HEK293 (cell line): ENCODE measurements at regions of chr2 and their contacts with region 1.

Region 1: GRCh38 chr2:37414470-37414949 is 70.1 kb downstream of the QPCT start:
- H3K4me3 ChIP-seq: no peak overlapping the region
- H3K27ac ChIP-seq: no peak overlapping the region
- H3K4me1 ChIP-seq: no peaks in the 10 kb centered on the region
- CTCF ChIP-seq: peak; percentile 56; the same call in 1 of the 2 replicates

Region 2: GRCh38 chr2:37306024-37306423 is 108.5 kb before region 1 on chr2:
- CTCF ChIA-PET with region 1: no interaction called
- POLR2A ChIA-PET with region 1: no interaction called
- H3K4me3 ChIP-seq: no peak overlapping the region
- H3K27ac ChIP-seq: no peak overlapping the region
- H3K4me1 ChIP-seq: peaks cover 32% of the 10 kb centered on the region
- CTCF ChIP-seq: no peak

Region 3: DNA sequence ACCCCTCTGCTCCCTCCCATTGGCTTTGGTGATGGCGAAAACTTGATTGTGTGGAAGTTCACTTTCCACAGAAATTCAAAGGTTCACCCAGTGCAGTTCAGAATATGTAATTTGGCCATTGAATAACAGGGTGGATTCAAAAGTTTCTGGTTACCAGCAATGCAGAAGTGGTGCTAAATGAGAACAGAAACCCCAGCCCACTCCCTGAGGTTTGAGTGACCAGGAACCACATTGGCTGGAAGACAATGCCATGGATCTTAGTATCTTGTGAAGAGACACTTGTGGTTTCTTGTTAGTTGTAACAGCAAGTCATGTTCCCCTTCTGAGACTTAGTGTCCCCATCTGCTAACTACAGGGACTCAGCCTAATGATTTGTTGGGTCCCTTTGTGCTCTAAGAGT is 20.2 kb before region 1 on chr2:
- CTCF ChIA-PET with region 1: interaction called, 26 read pairs
- POLR2A ChIA-PET with region 1: no interaction called
- H3K4me3 ChIP-seq: no peak overlapping the region
- H3K27ac ChIP-seq: no peak overlapping the region
- H3K4me1 ChIP-seq: 0 out of 2 replicates have a peak, but pooled peaks cover 7% of the 10 kb centered on the region
- CTCF ChIP-seq: no peak

Region 4: DNA sequence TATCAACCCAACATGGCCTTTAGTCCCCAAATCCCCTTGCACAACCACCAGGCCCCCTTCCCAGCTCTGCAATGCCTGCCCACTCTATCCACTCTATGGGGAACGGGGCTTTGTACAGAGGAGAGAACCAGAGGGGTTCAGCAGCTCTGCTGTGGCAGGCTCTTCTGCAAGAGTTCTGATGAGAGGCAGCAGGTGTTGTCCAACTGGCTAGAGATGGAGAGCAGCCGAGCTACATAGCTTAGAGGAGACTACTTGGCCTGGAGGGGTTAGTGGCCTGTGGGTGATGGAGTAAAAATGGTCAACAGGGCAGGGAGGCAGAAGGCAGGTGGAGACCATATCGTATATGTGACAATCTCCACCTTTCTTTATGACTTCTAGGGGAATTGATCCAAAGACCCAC is 32.9 kb after region 1 on chr2:
- CTCF ChIA-PET with region 1: interaction called, 14 read pairs
- POLR2A ChIA-PET with region 1: interaction called, 3 read pairs
- H3K4me3 ChIP-seq: no peak overlapping the region
- H3K27ac ChIP-seq: no peak overlapping the region
- H3K4me1 ChIP-seq: peaks cover 8% of the 10 kb centered on the region
- CTCF ChIP-seq: no peak

Region 5: DNA sequence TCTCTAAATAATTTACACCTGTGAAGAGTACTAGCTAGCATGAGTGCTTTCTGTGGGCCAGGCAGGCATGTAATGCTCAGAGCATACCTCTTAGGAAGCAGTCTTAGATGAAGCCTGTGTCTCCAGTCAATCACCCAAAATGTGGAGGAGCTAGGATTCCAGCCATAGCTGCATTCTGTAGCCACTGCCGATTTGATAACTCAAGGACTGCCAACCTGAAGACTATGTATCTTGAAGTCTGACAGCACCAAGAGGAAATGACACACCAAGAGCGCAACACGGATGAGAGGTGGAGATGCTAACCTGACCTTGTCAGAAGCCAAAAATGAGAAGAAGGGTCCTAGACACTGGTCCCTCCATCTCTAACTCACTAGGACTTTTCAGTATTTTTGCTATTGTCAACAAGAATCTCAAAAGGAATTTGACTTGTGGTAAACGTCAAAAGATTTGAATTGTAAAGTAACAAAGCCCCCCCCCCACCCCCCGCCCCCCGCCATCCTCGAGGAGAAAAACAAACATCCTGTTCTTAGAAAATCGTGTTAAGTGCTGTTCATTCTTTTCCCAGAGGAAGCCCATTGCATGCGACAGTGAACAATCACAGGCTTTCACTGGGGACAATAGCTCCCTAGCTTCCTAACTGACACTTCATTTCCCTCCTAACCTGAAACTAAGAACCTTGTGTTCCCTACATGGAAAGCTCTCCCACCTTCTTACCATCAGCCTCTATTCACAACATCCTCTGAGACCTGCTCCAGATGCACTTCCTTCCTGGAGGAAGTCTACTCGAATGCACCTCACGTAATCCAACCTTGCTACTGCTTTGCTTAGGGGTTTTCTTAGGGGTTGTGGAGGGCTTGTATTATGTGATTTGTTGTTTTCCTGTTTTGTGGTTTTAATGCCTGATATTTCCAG is 242.3 kb after region 1 on chr2:
- CTCF ChIA-PET with region 1: interaction called, 12 read pairs
- POLR2A ChIA-PET with region 1: no interaction called
- H3K4me3 ChIP-seq: no peak overlapping the region
- H3K27ac ChIP-seq: 0 out of 2 replicates have a peak overlapping the region, but pooled peaks have one; percentile 7
- H3K4me1 ChIP-seq: peaks cover 30% of the 10 kb centered on the region
- CTCF ChIP-seq: no peak

Region 6: GRCh38 chr2:37683921-37684780 is 269.6 kb after region 1 on chr2:
- CTCF ChIA-PET with region 1: no interaction called
- POLR2A ChIA-PET with region 1: no interaction called
- H3K4me3 ChIP-seq: no peak overlapping the region
- H3K27ac ChIP-seq: no peak overlapping the region
- H3K4me1 ChIP-seq: no peaks in the 10 kb centered on the region
- CTCF ChIP-seq: no peak

Region 7: DNA sequence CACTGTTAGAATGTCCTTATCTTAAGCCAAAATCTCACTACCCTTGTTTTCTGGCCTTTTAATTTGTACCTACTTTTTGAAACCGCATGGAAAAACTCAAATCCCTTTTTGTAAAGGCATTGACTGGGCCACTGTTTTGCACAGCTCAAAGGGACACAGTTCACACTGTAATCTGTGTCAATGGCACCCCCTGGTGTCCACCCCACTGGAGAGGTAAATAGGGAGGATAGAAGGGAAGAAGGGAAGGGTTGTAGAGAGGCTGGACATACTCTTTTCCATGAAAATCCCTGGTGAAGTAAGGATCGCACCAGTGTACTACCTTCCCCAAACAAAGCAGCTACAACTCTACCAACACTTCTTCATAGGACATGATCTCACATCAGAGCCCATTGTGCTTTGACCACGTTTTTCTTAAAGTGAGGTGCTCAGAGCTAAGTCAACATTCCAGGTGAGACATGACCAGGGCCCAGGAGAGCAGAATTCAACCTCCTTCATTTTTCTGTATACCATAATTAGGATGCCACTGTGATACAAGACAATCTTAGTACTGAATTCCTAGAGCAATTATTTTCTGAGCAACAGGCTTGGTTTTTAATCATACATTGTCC is 418.2 kb after region 1 on chr2:
- CTCF ChIA-PET with region 1: interaction called, 121 read pairs
- POLR2A ChIA-PET with region 1: no interaction called
- H3K4me3 ChIP-seq: no peak overlapping the region
- H3K27ac ChIP-seq: no peak overlapping the region
- H3K4me1 ChIP-seq: peaks cover 8% of the 10 kb centered on the region
- CTCF ChIP-seq: peak; percentile 78